Activated naive CD4-positive, alpha-beta T cell treated with anti-CD3 and anti-CD28 coated beads for 36 hours (primary cell): ENCODE measurements at regions of chr10 and their contacts with region 1.

Region 1: GRCh38 chr10:7269988-7270387 is 140.8 kb downstream of the SFMBT2 start:
- DNase-seq: no peak
- H3K4me3 Mint-ChIP-seq: peak overlapping the region; percentile 22
- H3K27ac Mint-ChIP-seq: peak overlapping the region; percentile 86
- H3K4me1 Mint-ChIP-seq: peaks cover 69% of the 10 kb centered on the region
- H3K27me3 Mint-ChIP-seq: no peaks in the 10 kb centered on the region

Region 2: DNA sequence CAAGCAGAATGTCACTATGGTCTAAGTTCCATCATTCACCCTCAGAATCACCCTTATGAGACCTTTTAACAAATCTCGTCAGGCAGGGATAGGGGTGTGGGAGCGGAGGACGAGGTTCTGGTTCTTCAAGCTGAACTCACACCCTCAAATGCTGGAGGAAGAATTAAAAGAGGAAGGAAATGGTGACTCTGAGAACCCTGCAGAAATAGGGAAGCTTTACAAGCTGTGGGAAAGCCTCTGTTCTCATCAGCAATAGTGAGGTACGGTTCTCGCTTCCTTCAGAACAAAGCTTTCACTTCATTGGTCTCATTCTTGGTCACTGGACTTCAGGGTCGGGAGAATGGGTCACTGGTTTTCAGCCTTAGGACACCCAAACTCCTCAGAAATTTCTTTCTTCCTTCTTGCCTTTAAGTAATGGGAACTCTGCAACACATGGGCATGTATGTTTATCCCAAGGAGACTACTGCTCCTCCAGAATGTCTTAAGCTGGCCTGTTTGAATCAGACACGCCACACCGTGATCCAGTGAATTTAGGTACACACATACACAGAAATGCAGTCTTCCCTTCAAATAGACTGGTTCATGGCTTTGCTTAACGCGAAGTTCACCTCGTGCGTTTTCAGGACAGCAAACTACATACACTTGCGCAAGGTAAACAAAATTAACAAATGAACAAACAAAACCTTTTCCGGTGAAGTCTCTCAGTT is 85.2 kb before region 1 on chr10:
- CTCF ChIA-PET with region 1: no interaction called
- intact Hi-C with region 1: loop called (anchors 1 kb)
- DNase-seq: no peak
- H3K4me3 Mint-ChIP-seq: peak overlapping the region; percentile 1
- H3K27ac Mint-ChIP-seq: peak overlapping the region; percentile 81
- H3K4me1 Mint-ChIP-seq: peaks cover 52% of the 10 kb centered on the region
- H3K27me3 Mint-ChIP-seq: no peaks in the 10 kb centered on the region

Region 3: DNA sequence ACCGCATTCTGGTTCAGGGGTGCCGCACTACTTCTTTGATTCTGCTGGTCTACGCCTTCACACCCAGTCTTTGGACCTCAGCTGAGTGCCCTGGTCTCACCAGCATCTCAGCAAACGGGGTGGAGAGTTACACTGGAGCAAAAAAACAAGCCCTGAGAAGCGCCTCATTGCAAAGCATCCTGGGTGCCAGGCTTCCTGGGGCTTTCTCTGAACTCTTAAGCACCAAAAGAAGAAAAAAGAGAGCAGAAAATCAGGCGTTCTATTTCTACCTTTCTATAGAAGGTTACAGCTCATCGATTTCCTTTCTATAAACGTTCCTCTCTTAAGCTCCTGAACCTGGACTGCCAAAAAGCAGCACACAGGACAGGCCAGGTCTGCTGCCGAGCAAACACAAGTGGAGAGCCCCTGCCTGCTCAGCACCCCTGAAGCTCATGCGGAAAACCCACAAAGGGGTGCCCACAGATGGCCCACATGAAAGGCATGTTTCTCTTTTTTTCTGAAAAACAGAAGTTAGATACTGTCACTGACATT is 77.1 kb before region 1 on chr10:
- CTCF ChIA-PET with region 1: no interaction called
- intact Hi-C with region 1: loop called (anchors 1 kb)
- DNase-seq: peak; percentile 79
- H3K4me3 Mint-ChIP-seq: peak overlapping the region; percentile 56
- H3K27ac Mint-ChIP-seq: peak overlapping the region; percentile 88
- H3K4me1 Mint-ChIP-seq: peaks cover 74% of the 10 kb centered on the region
- H3K27me3 Mint-ChIP-seq: no peaks in the 10 kb centered on the region

Region 4: GRCh38 chr10:7314170-7314569 is 44.2 kb after region 1 on chr10:
- CTCF ChIA-PET with region 1: interaction called, 3 read pairs
- intact Hi-C with region 1: loop called (anchors 1 kb)
- DNase-seq: peak; percentile 60
- H3K4me3 Mint-ChIP-seq: no peak overlapping the region
- H3K27ac Mint-ChIP-seq: peak overlapping the region; percentile 78
- H3K4me1 Mint-ChIP-seq: peaks cover 52% of the 10 kb centered on the region
- H3K27me3 Mint-ChIP-seq: no peaks in the 10 kb centered on the region

Region 5: GRCh38 chr10:7373039-7373438 is 103.1 kb after region 1 on chr10:
- CTCF ChIA-PET with region 1: no interaction called
- intact Hi-C with region 1: no loop called
- DNase-seq: no peak
- H3K4me3 Mint-ChIP-seq: no peak overlapping the region
- H3K27ac Mint-ChIP-seq: no peak overlapping the region
- H3K4me1 Mint-ChIP-seq: peaks cover 11% of the 10 kb centered on the region
- H3K27me3 Mint-ChIP-seq: no peaks in the 10 kb centered on the region

Region 6: GRCh38 chr10:7797582-7797981 is 527.6 kb after region 1 on chr10:
- CTCF ChIA-PET with region 1: no interaction called
- intact Hi-C with region 1: no loop called
- DNase-seq: no peak
- H3K4me3 Mint-ChIP-seq: no peak overlapping the region
- H3K27ac Mint-ChIP-seq: no peak overlapping the region
- H3K4me1 Mint-ChIP-seq: peaks cover 32% of the 10 kb centered on the region
- H3K27me3 Mint-ChIP-seq: no peaks in the 10 kb centered on the region